K562 (cell line): ENCODE measurements at regions of chr15 and their contacts with region 1.

Region 1: GRCh38 chr15:90362936-90363212 is 10.8 kb downstream of the ZNF774 start:
- DNase-seq: peak in 2 of 4 experiments; percentile 25 to 50
- ATAC-seq: peak; percentile 63
- H3K4me3 ChIP-seq: no peak overlapping the region
- H3K27ac ChIP-seq: peak overlapping the region; percentile 67; the same call in 1 of the 3 replicates
- H3K4me1 ChIP-seq: peaks cover 0 to 17% of the 10 kb centered on the region in 2 experiments; a peak in 4 of 5 replicates
- H3K27me3 ChIP-seq: no peaks in the 10 kb centered on the region
- CTCF ChIP-seq: no peak
- EP300 ChIP-seq: no peak
- POLR2A ChIP-seq: no peak
- RAD21 ChIP-seq: no peak

Region 2: DNA sequence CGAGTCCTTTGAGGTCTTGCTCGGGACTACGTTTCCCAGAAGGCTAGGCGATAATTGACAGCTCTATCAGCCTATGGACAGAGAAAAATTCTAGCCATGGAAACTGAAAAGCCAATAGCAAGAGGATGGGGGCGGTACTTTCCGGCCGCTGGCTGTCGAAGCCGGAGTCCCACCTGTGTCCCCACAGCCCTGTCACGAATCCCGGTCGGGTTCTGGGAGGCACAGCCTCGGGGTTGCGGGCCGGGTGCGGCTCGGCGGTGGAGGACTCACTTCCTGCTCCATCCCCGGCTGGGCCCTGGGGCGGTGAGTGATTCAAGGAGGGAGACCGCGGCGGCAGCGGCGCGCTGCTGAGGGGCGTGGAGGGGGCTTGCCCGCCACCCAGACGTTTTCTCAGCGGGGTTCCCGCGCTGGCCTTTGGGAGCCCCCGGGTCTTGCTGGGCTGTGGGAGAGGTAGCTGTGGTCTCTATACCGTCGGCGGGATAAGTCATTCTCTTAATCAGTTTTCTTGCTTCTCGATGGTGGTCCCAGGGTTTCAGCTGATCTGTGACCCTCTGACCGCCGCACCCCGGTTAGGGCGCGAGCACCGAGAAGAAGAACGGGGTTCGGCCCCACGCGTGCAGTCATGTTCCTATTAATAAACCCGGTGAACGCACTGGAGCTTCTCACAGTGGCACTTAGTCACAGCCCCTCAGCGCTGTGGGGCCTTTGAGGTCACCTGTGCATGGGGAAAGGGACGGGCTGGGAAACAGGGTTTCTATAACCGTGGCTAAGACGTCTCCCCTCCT is 10.6 kb before region 1 on chr15 and contains the start of gene ZNF774:
- CTCF ChIA-PET with region 1: no interaction called
- POLR2A ChIA-PET with region 1: interaction called, 25 read pairs
- in situ Hi-C with region 1: no loop called
- intact Hi-C with region 1: no loop called
- DNase-seq: peak; percentile 94 to 100 (median 96)
- ATAC-seq: peak; percentile 99
- H3K4me3 ChIP-seq: peak within 1 kb of the TSS; percentile 65
- H3K27ac ChIP-seq: peak within 1 kb of the TSS; percentile 51; the same call in 2 of the 3 replicates
- H3K4me1 ChIP-seq: peaks cover 3 to 13% of the 10 kb centered on the region in 2 experiments; a peak in 4 of 5 replicates
- H3K27me3 ChIP-seq: no peaks in the 10 kb centered on the region
- CTCF ChIP-seq: no peak
- EP300 ChIP-seq: no peak
- POLR2A ChIP-seq: peak; percentile 79
- RAD21 ChIP-seq: no peak
- polyA plus RNA-seq, gene ZNF774: 0.32 to 0.34 TPM

Region 3: GRCh38 chr15:90400406-90401314 is 37.8 kb after region 1 on chr15:
- CTCF ChIA-PET with region 1: no interaction called
- POLR2A ChIA-PET with region 1: no interaction called
- in situ Hi-C with region 1: no loop called
- intact Hi-C with region 1: loop called (anchors 5 kb)
- DNase-seq: peak; percentile 71 to 88 (median 79)
- ATAC-seq: peak; percentile 97
- H3K4me3 ChIP-seq: no peak overlapping the region
- H3K27ac ChIP-seq: peak overlapping the region; percentile 82
- H3K4me1 ChIP-seq: peaks cover 0 to 29% of the 10 kb centered on the region in 2 experiments; a peak in 3 of 5 replicates
- H3K27me3 ChIP-seq: no peaks in the 10 kb centered on the region
- CTCF ChIP-seq: no peak
- EP300 ChIP-seq: peak; percentile 51
- POLR2A ChIP-seq: no peak
- RAD21 ChIP-seq: no peak

Region 4: GRCh38 chr15:90553248-90553745 is 190.4 kb after region 1 on chr15:
- CTCF ChIA-PET with region 1: no interaction called
- POLR2A ChIA-PET with region 1: no interaction called
- in situ Hi-C with region 1: no loop called
- intact Hi-C with region 1: no loop called
- DNase-seq: no peak
- ATAC-seq: no peak
- H3K4me3 ChIP-seq: no peak overlapping the region
- H3K27ac ChIP-seq: no peak overlapping the region
- H3K4me1 ChIP-seq: peaks cover 11 to 17% of the 10 kb centered on the region in 2 experiments
- H3K27me3 ChIP-seq: no peaks in the 10 kb centered on the region
- CTCF ChIP-seq: no peak
- EP300 ChIP-seq: no peak
- POLR2A ChIP-seq: no peak
- RAD21 ChIP-seq: no peak

Region 5: GRCh38 chr15:91022075-91022835 is 659.4 kb after region 1 on chr15 and contains the start of gene VPS33B:
- CTCF ChIA-PET with region 1: no interaction called
- POLR2A ChIA-PET with region 1: no interaction called
- in situ Hi-C with region 1: no loop called
- intact Hi-C with region 1: no loop called
- DNase-seq: peak; percentile 80 to 93 (median 85)
- ATAC-seq: peak; percentile 87
- H3K4me3 ChIP-seq: peak within 1 kb of the TSS; percentile 78
- H3K27ac ChIP-seq: peak within 1 kb of the TSS; percentile 74
- H3K4me1 ChIP-seq: peaks cover 18 to 21% of the 10 kb centered on the region in 2 experiments; a peak in 4 of 5 replicates
- H3K27me3 ChIP-seq: no peaks in the 10 kb centered on the region
- CTCF ChIP-seq: no peak; a peak in 1 of 6 replicates
- EP300 ChIP-seq: no peak
- POLR2A ChIP-seq: peak; percentile 85
- RAD21 ChIP-seq: no peak
- polyA plus RNA-seq, gene VPS33B: 9.8 to 10.7 TPM